ENCODE measurements at regions of chr5 and their contacts with region 1.

Region 1: GRCh38 chr5:111284825-111285224 is 60.6 kb downstream of the CAMK4 start:
- DNase-seq: no peak
- ATAC-seq: no peak
- H3K4me3 ChIP-seq: no peak overlapping the region
- H3K4me3 Mint-ChIP-seq: no peak overlapping the region
- H3K27ac ChIP-seq: no peak overlapping the region
- H3K27ac Mint-ChIP-seq: no peak overlapping the region
- H3K4me1 ChIP-seq: peaks cover 34% of the 10 kb centered on the region
- H3K4me1 Mint-ChIP-seq: peaks cover 85% of the 10 kb centered on the region
- H3K27me3 ChIP-seq: no peaks in the 10 kb centered on the region
- H3K27me3 Mint-ChIP-seq: no peaks in the 10 kb centered on the region
- CTCF ChIP-seq: no peak

Region 2: GRCh38 chr5:111135946-111136345 is 148.9 kb before region 1 on chr5:
- CTCF ChIA-PET with region 1: no interaction called
- POLR2A ChIA-PET with region 1: no interaction called
- intact Hi-C with region 1: no loop called
- DNase-seq: no peak
- ATAC-seq: no peak
- H3K4me3 ChIP-seq: no peak overlapping the region
- H3K4me3 Mint-ChIP-seq: no peak overlapping the region
- H3K27ac ChIP-seq: no peak overlapping the region
- H3K27ac Mint-ChIP-seq: no peak overlapping the region
- H3K4me1 ChIP-seq: no peaks in the 10 kb centered on the region
- H3K4me1 Mint-ChIP-seq: no peaks in the 10 kb centered on the region
- H3K27me3 ChIP-seq: no peaks in the 10 kb centered on the region
- H3K27me3 Mint-ChIP-seq: peaks cover 8% of the 10 kb centered on the region
- CTCF ChIP-seq: no peak

Region 3: DNA sequence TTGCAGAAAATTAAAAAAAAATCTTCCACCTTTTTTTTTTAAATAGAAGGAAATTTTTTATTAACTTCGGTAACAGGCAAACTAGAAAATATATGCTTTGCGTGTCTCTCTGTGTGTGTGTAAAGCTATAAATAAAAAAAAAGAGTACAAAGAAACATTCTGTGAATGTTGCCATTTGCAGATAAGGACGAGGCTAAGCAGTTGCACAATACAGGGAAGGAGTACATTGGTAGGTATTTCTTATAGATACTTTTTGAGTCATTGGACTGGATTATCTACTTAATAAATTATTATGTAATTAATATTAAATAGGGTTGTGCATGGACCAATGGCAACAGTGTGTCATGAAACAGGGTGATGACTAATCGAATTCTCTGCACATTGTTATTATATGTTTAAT is 41.7 kb after region 1 on chr5:
- CTCF ChIA-PET with region 1: no interaction called
- POLR2A ChIA-PET with region 1: no interaction called
- intact Hi-C with region 1: loop called in 1 of 2 experiments (anchors 2 kb)
- DNase-seq: no peak
- ATAC-seq: no peak
- H3K4me3 ChIP-seq: no peak overlapping the region
- H3K4me3 Mint-ChIP-seq: no peak overlapping the region
- H3K27ac ChIP-seq: no peak overlapping the region
- H3K27ac Mint-ChIP-seq: no peak overlapping the region
- H3K4me1 ChIP-seq: no peaks in the 10 kb centered on the region
- H3K4me1 Mint-ChIP-seq: peaks cover 18% of the 10 kb centered on the region
- H3K27me3 ChIP-seq: no peaks in the 10 kb centered on the region
- H3K27me3 Mint-ChIP-seq: no peaks in the 10 kb centered on the region
- CTCF ChIP-seq: no peak